Panc1 (cell line): ENCODE measurements at regions of chr21 and their contacts with region 1.

Region 1: DNA sequence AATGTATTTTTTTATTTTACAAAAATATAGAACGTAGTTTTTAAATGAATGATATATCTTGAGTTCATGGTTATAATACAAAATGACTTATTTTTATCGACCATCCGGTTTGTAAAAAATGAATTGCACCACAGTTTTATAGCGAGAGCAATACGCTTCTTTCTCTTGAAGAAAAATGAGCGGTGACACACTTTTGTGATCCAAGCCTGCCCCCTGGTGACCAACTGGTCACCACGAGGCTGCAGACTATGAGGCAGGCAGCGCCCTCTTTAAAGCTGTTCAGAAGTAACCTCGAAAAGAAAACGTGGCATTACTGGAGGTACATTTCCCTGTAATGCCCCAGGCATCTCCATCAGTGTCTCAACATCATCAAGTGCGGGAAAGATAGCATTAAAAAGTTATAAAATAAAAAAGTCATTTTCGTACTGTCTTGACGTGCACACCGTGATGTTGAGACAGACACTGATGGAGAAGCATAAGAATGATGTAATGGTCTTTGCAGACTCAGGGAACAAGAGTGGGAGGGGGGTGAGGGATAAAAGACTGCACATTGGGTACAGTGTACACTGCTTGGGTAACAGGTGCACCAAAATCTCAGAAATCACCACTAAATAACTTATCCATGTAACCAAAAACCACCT is 734.2 kb upstream of the ADAMTS5 start:
- DNase-seq: peak; percentile 46
- ATAC-seq: peak; percentile 70
- H3K4me3 ChIP-seq: no peak overlapping the region
- H3K27ac ChIP-seq: no peak overlapping the region
- H3K4me1 ChIP-seq: no peaks in the 10 kb centered on the region
- H3K27me3 ChIP-seq: no peaks in the 10 kb centered on the region
- CTCF ChIP-seq: peak; percentile 77

Region 2: DNA sequence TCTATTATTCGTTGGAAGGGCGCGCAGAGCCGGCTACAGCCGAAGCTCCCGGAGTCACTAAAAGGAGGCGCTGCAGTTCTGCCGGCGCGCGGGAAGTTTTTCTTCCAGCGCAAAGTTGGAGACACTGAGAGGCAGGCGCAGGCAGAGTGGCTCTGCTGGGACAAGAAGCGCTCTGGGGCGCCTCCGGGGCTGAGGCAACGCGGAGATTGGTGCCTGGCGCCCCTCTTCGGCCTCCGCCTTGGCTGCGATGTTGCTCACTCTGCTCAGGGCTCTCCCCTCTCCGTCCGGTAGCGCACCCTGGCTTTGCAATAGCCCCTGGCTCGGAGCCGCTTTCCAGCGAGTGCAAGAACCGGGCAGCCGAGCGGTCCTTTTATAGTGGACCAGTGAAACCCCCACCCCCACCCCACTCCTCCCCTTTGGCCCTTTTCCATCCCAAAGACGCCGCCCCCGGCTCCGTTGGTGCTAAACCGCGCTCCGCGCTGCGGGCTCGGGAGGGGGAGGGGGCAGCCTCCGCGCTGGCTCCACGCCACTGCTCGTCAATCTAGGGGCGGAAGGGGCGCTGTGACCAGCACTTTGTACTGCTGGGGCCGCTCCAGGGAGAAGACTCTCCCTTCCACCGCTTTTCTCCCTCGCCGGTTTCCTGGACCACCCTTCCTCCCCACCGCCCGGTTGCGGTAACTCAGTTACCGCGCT is 855.9 kb before region 1 on chr21 and contains the start of gene ADAMTS1:
- CTCF ChIA-PET with region 1: no interaction called
- POLR2A ChIA-PET with region 1: no interaction called
- in situ Hi-C with region 1: no loop called
- intact Hi-C with region 1: loop called (anchors 1 kb)
- DNase-seq: no peak
- ATAC-seq: peak; percentile 63
- H3K4me3 ChIP-seq: peak within 1 kb of the TSS; percentile 48 to 67
- H3K27ac ChIP-seq: no peak within 1 kb of the TSS
- H3K4me1 ChIP-seq: no peaks in the 10 kb centered on the region; the same call in 1 of the 2 replicates
- H3K27me3 ChIP-seq: peaks cover 5% of the 10 kb centered on the region; the same call in 1 of the 2 replicates
- CTCF ChIP-seq: peak; percentile 8; the same call in 1 of the 2 replicates
- total RNA-seq, gene ADAMTS1: 3.3 TPM

Region 3: DNA sequence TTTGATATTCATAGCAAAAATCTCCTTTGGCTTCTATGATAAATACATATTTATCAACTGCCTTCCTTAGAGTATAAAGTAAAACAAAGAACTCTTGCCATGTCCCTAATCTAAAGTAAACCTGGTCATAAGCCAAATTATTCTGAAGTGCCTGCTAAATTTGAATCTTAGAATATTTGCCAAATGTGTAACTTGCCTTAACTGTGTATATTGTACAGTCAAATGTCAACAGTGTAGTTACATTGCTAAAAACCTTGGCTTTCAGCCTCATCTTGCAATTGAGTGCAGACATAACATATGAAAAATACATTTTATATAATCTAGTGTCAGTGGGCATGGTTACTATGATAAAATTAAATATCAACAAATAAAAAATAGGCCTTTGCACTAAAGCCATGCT is 150.8 kb before region 1 on chr21:
- CTCF ChIA-PET with region 1: no interaction called
- POLR2A ChIA-PET with region 1: no interaction called
- in situ Hi-C with region 1: no loop called
- intact Hi-C with region 1: no loop called
- DNase-seq: no peak
- ATAC-seq: no peak
- H3K4me3 ChIP-seq: no peak overlapping the region
- H3K27ac ChIP-seq: no peak overlapping the region
- H3K4me1 ChIP-seq: no peaks in the 10 kb centered on the region
- H3K27me3 ChIP-seq: no peaks in the 10 kb centered on the region
- CTCF ChIP-seq: no peak

Region 4: GRCh38 chr21:27570306-27570868 is 130.7 kb before region 1 on chr21:
- CTCF ChIA-PET with region 1: no interaction called
- POLR2A ChIA-PET with region 1: no interaction called
- in situ Hi-C with region 1: no loop called
- intact Hi-C with region 1: no loop called
- DNase-seq: no peak
- ATAC-seq: no peak
- H3K4me3 ChIP-seq: no peak overlapping the region
- H3K27ac ChIP-seq: no peak overlapping the region
- H3K4me1 ChIP-seq: no peaks in the 10 kb centered on the region
- H3K27me3 ChIP-seq: no peaks in the 10 kb centered on the region
- CTCF ChIP-seq: no peak